GM12878 (cell line): ENCODE measurements at regions of chr15 and their contacts with region 1.

Region 1: GRCh38 chr15:60635507-60636352 is 156.8 kb upstream of the ICE2 start:
- DNase-seq: peak; percentile 79
- ATAC-seq: peak; percentile 93
- H3K4me3 ChIP-seq: no peak overlapping the region
- H3K27ac ChIP-seq: peak overlapping the region; percentile 78
- H3K4me1 ChIP-seq: peaks cover 22% of the 10 kb centered on the region
- H3K27me3 ChIP-seq: no peaks in the 10 kb centered on the region
- CTCF ChIP-seq: no peak
- EP300 ChIP-seq: peak; percentile 32 to 81; a peak in 3 of 4 replicates
- POLR2A ChIP-seq: no peak
- RAD21 ChIP-seq: no peak

Region 2: GRCh38 chr15:60592371-60593169 is 43.2 kb before region 1 on chr15:
- CTCF ChIA-PET with region 1: interaction called, 3 read pairs
- POLR2A ChIA-PET with region 1: interaction called, 3 read pairs
- RAD21 ChIA-PET with region 1: interaction called, 3 read pairs
- SMC1A ChIA-PET with region 1: no interaction called
- in situ Hi-C with region 1: no loop called
- intact Hi-C with region 1: loop called (anchors 5 kb)
- DNase-seq: no peak
- ATAC-seq: peak; percentile 74
- H3K4me3 ChIP-seq: peak overlapping the region; percentile 83
- H3K27ac ChIP-seq: no peak overlapping the region
- H3K4me1 ChIP-seq: no peaks in the 10 kb centered on the region
- H3K27me3 ChIP-seq: no peaks in the 10 kb centered on the region; a peak in 1 of 4 replicates
- CTCF ChIP-seq: peak; percentile 20 to 40 (median 35); a peak in 4 of 6 replicates
- EP300 ChIP-seq: no peak
- POLR2A ChIP-seq: peak; percentile 82
- RAD21 ChIP-seq: peak; percentile 19; the same call in 1 of the 2 replicates

Region 3: GRCh38 chr15:60720493-60721256 is 84.9 kb after region 1 on chr15:
- CTCF ChIA-PET with region 1: no interaction called
- POLR2A ChIA-PET with region 1: no interaction called
- RAD21 ChIA-PET with region 1: no interaction called
- SMC1A ChIA-PET with region 1: no interaction called
- in situ Hi-C with region 1: no loop called
- intact Hi-C with region 1: loop called (anchors 1 kb)
- DNase-seq: peak; percentile 67
- ATAC-seq: peak; percentile 88
- H3K4me3 ChIP-seq: peak overlapping the region; percentile 48; the same call in 1 of the 2 replicates
- H3K27ac ChIP-seq: peak overlapping the region; percentile 68
- H3K4me1 ChIP-seq: peaks cover 35% of the 10 kb centered on the region
- H3K27me3 ChIP-seq: no peaks in the 10 kb centered on the region
- CTCF ChIP-seq: no peak
- EP300 ChIP-seq: peak; percentile 28 to 54; a peak in 3 of 4 replicates
- POLR2A ChIP-seq: no peak
- RAD21 ChIP-seq: no peak; the same call in 1 of the 2 replicates

Region 4: DNA sequence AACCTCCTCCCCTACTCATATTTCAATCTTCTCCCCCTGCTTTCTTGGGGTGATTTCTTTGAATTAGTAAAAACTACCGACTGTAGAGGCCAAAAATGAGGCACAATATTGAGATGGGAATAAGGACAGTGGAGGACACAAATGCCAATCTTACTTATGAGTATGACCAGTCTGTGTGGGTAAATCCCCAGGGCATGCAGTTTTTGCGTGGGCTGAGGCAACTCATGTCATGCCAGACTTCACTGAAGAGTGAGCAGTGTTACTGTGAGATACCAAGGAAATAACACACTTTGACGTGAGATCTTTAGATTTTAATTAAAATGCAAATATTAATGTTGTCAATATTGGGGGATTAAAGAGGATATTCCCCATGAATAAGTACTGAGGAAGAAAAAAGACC is 97.5 kb after region 1 on chr15:
- CTCF ChIA-PET with region 1: no interaction called
- POLR2A ChIA-PET with region 1: no interaction called
- RAD21 ChIA-PET with region 1: no interaction called
- SMC1A ChIA-PET with region 1: no interaction called
- in situ Hi-C with region 1: no loop called
- intact Hi-C with region 1: no loop called
- DNase-seq: no peak
- ATAC-seq: 0 out of 3 replicates have a peak, but pooled peaks have one; percentile 40
- H3K4me3 ChIP-seq: no peak overlapping the region
- H3K27ac ChIP-seq: no peak overlapping the region
- H3K4me1 ChIP-seq: no peaks in the 10 kb centered on the region; the same call in 1 of the 2 replicates
- H3K27me3 ChIP-seq: no peaks in the 10 kb centered on the region
- CTCF ChIP-seq: no peak
- EP300 ChIP-seq: no peak
- POLR2A ChIP-seq: no peak
- RAD21 ChIP-seq: no peak

Region 5: GRCh38 chr15:60798821-60799220 is 163.1 kb after region 1 on chr15:
- CTCF ChIA-PET with region 1: no interaction called
- POLR2A ChIA-PET with region 1: no interaction called
- RAD21 ChIA-PET with region 1: no interaction called
- SMC1A ChIA-PET with region 1: no interaction called
- in situ Hi-C with region 1: no loop called
- intact Hi-C with region 1: loop called (anchors 5 kb)
- DNase-seq: peak; percentile 19
- ATAC-seq: peak; percentile 76
- H3K4me3 ChIP-seq: no peak overlapping the region
- H3K27ac ChIP-seq: no peak overlapping the region
- H3K4me1 ChIP-seq: peaks cover 19% of the 10 kb centered on the region
- H3K27me3 ChIP-seq: no peaks in the 10 kb centered on the region
- CTCF ChIP-seq: no peak
- EP300 ChIP-seq: no peak
- POLR2A ChIP-seq: no peak
- RAD21 ChIP-seq: 0 out of 2 replicates have a peak, but pooled peaks have one; percentile 20